Activated T-helper 2 cell treated with anti-CD3 and anti-CD28 coated beads, Interferon-gamma antibody, Interleukin-2, Interleukin-4, amounts not matched to agents 10 μg/mL and 5 μg/mL and 100 μg/mL, durations not matched to agents 14 hours and 24 hours and 36 hours (primary cell): ENCODE measurements at regions of chr4 and their contacts with region 1.

Region 1: DNA sequence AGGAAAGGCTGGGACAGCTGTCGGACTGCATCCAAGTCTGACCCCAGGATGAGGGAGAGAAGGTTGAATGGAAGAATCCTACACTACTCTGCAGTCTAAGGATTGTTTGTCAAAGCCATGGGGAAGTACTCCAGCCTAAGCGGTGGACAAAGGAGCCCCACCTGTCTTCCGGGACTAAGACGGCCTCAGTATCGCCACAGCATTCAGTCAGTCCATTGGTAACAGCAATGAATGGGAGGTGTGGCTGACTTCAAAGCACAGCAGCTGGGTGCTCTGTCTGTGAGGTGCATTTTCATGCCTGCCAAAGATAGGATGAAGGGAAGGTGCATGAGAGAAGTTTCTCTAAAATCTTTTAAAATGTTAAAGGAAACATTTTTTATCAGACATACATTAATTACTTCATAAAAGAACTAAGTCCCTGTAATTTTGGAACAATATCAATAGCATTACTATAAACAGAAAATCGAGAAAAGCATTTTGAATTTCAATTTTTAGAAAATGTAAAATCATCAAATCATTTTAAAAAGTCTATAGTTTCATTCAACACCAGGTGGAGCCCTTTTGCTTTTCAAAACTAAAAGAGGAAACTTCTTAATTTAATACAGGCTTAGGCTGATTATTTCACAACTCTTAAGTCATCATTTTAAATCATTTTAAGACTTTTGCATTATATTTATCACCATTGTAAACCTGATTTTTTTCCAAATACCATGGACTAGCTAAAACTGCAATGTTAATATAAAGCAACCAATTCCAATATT is 27.6 kb upstream of the INTU start:
- DNase-seq: no peak
- H3K4me3 Mint-ChIP-seq: no peak overlapping the region
- H3K27ac Mint-ChIP-seq: no peak overlapping the region
- H3K4me1 Mint-ChIP-seq: no peaks in the 10 kb centered on the region
- H3K27me3 Mint-ChIP-seq: peaks cover 3% of the 10 kb centered on the region

Region 2: GRCh38 chr4:127486248-127486647 is 118.9 kb before region 1 on chr4:
- intact Hi-C with region 1: no loop called
- DNase-seq: no peak
- H3K4me3 Mint-ChIP-seq: no peak overlapping the region
- H3K27ac Mint-ChIP-seq: no peak overlapping the region
- H3K4me1 Mint-ChIP-seq: no peaks in the 10 kb centered on the region
- H3K27me3 Mint-ChIP-seq: no peaks in the 10 kb centered on the region

Region 3: DNA sequence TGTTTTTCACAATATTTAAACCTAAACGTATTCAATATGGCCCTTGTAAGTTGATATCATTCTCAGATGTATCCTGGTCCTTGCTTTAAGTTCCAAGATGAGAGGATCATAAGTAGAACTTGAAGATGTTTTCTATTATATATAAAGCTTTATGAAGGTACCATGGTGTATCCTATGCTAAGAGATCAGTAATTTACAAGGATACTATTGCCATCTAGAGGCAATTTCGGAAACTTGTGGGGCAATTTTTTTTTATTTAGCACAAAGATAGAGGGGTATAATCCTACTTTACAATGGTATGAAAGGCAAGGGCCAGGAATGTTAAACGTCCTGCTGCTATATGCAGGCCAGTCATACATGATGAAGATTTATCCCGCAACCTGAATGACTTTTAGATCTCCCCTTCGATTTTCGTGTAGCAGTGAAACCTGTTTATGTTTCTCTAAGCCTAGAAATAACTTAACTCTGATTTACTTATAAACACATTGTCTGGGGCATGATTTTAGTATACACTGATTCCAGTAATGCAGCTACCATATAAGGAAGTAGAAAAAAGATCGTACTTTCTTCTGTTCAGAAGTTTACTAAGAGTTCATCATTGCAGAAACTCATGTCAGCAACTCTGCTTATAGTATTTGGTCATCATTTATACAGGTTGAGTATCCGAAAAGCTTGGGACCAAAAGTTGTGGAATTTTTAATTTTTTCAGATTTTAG is 127.6 kb after region 1 on chr4:
- intact Hi-C with region 1: loop called (anchors 1 kb)
- DNase-seq: no peak
- H3K4me3 Mint-ChIP-seq: no peak overlapping the region
- H3K27ac Mint-ChIP-seq: no peak overlapping the region
- H3K4me1 Mint-ChIP-seq: no peaks in the 10 kb centered on the region
- H3K27me3 Mint-ChIP-seq: no peaks in the 10 kb centered on the region

Region 4: DNA sequence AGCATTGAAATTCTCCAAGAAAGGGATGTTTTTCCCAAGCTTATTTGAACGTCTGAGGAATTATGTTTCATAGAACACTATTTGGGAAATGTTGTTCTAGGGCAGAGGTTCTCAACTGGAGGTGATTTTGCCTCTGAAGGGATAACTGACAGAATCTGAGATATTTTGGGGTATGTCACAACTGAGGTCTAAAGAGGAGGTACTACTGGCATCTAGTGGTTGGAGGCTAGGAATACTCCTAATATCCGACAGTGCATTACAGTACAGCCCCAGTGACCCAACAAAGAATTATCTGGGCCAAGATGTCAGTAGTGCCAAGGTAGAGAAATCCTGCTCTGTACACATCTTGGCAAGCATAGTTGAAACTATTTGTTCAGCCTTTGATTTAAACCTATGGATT is 183.4 kb after region 1 on chr4:
- intact Hi-C with region 1: loop called (anchors 2 kb)
- DNase-seq: no peak
- H3K4me3 Mint-ChIP-seq: no peak overlapping the region
- H3K27ac Mint-ChIP-seq: no peak overlapping the region
- H3K4me1 Mint-ChIP-seq: peaks cover 9% of the 10 kb centered on the region
- H3K27me3 Mint-ChIP-seq: peaks cover 46% of the 10 kb centered on the region